ENCODE measurements at regions of chr14 and their contacts with region 1.

Region 1: DNA sequence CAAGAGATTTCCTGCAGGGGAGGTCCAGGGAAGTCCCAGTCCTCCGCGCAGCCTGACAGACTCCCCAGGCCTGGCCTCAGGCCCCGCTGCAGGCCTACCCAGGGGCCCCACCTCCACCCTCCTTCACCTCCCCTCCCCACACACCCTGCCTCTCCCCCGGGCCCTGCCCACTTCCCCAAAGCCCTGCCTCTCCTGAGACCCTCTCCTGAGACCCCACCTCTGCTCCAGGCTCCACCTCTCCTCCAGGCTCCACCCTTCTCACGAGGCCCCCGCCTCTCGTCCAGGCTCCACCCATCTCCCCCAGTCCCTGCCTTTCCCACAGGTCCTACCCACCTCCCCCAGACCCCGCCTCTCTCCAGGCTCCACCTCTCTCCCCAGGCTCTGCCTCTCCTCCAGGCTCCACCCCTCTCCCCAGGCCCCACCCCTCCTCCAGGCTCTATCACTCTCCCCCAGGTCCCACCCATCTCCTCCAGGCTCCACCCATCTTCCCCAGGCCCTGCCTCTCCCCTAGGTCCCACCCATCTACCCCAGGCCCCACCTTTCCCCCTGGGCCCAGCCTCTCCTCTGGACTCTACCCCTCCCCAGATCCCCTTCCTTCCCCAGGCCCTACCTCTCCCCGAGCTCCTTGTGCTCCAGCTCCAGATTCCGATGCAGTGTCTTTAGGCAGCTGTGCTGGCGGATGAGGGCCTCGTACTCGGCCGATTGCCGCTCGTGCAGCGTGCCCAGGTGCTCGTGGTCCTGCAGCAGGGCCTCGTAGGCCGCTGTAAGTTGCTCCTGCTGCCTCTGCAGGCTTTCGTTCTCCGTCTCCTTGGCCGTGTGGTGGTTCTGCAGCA is 58.8 kb upstream of the GPR68 start:
- DNase-seq: peak; percentile 36
- H3K4me3 Mint-ChIP-seq: peak overlapping the region; percentile 63
- H3K27ac Mint-ChIP-seq: peak overlapping the region; percentile 98
- H3K4me1 Mint-ChIP-seq: peaks cover 72% of the 10 kb centered on the region
- H3K27me3 Mint-ChIP-seq: no peaks in the 10 kb centered on the region

Region 2: GRCh38 chr14:91244501-91244901 is 58.8 kb before region 1 on chr14 and contains the start of gene GPR68:
- intact Hi-C with region 1: loop called (anchors 2 kb)
- DNase-seq: no peak
- H3K4me3 Mint-ChIP-seq: peak within 1 kb of the TSS; percentile 85
- H3K27ac Mint-ChIP-seq: peak within 1 kb of the TSS; percentile 88
- H3K4me1 Mint-ChIP-seq: peaks cover 89% of the 10 kb centered on the region
- H3K27me3 Mint-ChIP-seq: no peaks in the 10 kb centered on the region
- total RNA-seq, gene GPR68: 4.5 and 5.4 TPM in 2 replicates